Activated CD4-positive, alpha-beta T cell treated with anti-CD3 and anti-CD28 coated beads for 36 hours (primary cell): ENCODE measurements at regions of chr7 and their contacts with region 1.

Region 1: DNA sequence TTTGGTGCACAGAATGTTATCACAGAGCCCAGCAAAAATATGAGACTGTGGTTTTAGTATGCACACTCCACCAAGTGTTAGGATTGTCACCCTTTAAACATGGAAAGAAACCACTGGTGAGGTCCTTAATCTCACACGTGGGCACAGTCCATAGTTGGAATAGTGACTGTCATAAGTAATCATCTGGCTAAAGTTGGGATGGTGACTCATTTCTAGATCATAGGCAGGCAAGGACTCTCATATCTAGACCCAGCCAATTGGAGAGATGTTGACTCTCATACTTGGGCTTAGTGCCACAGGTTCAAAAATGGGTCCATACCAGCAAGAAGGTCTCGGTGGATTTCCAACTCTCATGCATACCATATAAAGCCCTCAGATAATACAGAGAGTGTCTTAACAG is 39.6 kb upstream of the ZNF680 start:
- DNase-seq: no peak
- ATAC-seq: no peak
- H3K4me3 Mint-ChIP-seq: no peak overlapping the region
- H3K27ac Mint-ChIP-seq: no peak overlapping the region
- H3K4me1 Mint-ChIP-seq: no peaks in the 10 kb centered on the region
- H3K27me3 Mint-ChIP-seq: no peaks in the 10 kb centered on the region

Region 2: GRCh38 chr7:64515330-64515729 is 87.2 kb before region 1 on chr7:
- CTCF ChIA-PET with region 1: no interaction called
- POLR2A ChIA-PET with region 1: no interaction called
- intact Hi-C with region 1: no loop called
- DNase-seq: peak; percentile 10
- ATAC-seq: no peak
- H3K4me3 Mint-ChIP-seq: no peak overlapping the region
- H3K27ac Mint-ChIP-seq: no peak overlapping the region
- H3K4me1 Mint-ChIP-seq: no peaks in the 10 kb centered on the region
- H3K27me3 Mint-ChIP-seq: no peaks in the 10 kb centered on the region

Region 3: DNA sequence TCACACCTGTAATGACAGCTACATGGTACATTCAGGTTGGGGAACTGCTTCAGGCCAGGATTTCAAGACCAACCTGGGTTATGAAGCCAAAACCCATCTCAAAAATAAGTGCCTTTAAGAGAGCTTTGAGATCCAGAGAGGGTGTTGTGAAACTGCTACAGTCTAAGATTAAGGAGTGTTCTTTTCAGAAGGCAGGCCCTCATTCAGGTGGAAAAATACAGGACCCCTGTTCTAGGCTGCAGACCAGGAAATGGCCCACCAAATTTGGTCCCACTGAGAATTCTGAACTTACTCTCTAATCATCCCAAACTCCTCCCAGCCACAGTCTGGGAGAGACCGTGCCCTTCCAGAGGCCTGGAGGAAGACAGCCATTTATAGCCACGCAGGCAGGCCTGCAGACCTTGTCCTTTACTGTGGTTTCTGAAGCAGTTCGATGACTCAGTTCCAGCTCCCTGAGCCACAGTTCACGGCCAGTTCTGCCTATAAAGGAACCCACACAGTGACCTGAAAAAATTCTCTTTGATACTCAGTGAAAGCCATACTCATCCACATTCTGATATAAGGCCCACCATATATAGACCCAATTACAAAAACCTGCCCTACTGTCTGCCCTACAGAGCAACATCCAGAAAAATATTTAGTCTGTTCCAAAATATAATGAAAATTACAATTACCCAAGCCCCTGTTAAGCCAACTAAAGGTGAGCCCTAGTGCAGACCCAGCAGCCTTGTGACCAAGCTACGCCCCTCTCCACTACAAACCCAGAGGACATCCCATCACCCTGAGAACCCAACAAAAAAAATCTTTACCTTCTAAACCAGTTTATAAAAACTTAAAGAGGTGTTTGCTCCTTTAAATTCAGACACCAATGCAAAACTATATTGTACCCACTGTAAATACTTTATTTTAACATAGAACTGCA is 60.8 kb before region 1 on chr7:
- CTCF ChIA-PET with region 1: interaction called, 3 read pairs
- POLR2A ChIA-PET with region 1: no interaction called
- intact Hi-C with region 1: loop called in 1 of 2 experiments (anchors 10 kb)
- DNase-seq: no peak
- ATAC-seq: no peak
- H3K4me3 Mint-ChIP-seq: no peak overlapping the region
- H3K27ac Mint-ChIP-seq: peak overlapping the region; percentile 3
- H3K4me1 Mint-ChIP-seq: peaks cover 5% of the 10 kb centered on the region
- H3K27me3 Mint-ChIP-seq: no peaks in the 10 kb centered on the region

Region 4: DNA sequence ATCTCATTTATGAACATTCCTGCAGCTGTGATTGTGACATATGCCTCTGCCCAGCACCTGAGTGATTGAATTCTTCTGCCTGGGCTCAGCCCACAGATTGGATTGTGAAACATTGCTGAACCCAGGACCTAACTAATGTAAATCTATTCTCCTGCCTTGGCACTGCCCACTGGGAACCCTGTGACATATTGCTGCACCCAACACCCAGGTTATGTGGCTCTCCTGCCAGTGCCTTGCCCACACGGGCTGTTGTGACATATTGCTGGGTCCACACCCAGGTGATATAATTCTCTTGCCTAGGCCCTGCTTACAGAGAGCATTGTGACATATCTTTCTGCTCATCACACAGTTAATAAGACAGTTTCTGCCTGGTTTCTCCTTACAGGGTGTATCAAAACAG is 11.1 kb after region 1 on chr7:
- CTCF ChIA-PET with region 1: no interaction called
- POLR2A ChIA-PET with region 1: no interaction called
- intact Hi-C with region 1: no loop called
- DNase-seq: no peak
- ATAC-seq: no peak
- H3K4me3 Mint-ChIP-seq: no peak overlapping the region
- H3K27ac Mint-ChIP-seq: no peak overlapping the region
- H3K4me1 Mint-ChIP-seq: no peaks in the 10 kb centered on the region
- H3K27me3 Mint-ChIP-seq: no peaks in the 10 kb centered on the region